MCF 10A (cell line): ENCODE measurements at regions of chr12 and their contacts with region 1.

Region 1: DNA sequence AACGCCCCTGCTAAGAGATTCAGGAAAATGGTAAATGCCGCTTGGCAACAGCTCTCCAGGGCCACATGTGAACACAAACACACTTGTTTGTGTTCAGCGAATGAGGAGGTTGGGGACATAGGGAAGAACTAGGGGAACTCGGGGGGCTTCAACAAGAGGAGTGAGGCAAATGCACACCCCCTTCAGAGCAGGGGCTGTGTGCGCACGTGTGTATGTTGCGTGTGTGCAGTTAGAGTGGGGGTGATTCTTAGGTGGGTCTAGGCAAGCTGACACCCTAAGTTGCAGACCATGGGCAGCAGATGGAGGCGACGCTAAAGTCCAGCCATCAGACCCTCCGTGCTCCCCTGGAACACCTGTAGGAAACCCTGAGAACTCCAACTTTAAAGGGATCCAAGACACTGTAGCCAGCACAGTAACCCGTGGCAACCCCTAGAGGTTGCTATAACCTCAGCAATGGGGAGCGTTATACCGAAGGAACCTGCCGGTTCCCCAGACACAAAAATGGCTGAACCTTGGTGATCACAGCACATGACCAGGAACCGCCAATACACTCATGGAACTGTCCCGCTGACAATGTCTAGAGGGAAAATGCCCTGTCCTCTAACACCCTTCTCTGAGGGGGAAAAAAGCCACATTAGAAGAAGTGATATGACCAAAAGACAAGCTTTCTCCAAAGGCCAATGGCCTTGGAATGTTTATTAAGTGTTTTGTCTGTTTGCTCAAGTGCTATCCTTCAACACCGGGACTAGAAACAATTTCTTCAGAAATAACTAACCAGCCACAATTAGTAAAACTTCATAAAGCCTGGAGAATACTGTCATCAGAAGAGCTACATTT is 86.5 kb upstream of the CEP83 start:
- DNase-seq: peak; percentile 67
- H3K4me3 Mint-ChIP-seq: no peak overlapping the region
- H3K27ac Mint-ChIP-seq: no peak overlapping the region
- H3K4me1 Mint-ChIP-seq: peaks cover 5% of the 10 kb centered on the region
- H3K27me3 Mint-ChIP-seq: no peaks in the 10 kb centered on the region
- CTCF ChIP-seq: peak; percentile 84

Region 2: GRCh38 chr12:94516985-94517384 is 29.2 kb before region 1 on chr12:
- CTCF ChIA-PET with region 1: no interaction called
- POLR2A ChIA-PET with region 1: no interaction called
- intact Hi-C with region 1: no loop called
- DNase-seq: no peak
- H3K4me3 Mint-ChIP-seq: no peak overlapping the region
- H3K27ac Mint-ChIP-seq: no peak overlapping the region
- H3K4me1 Mint-ChIP-seq: no peaks in the 10 kb centered on the region
- H3K27me3 Mint-ChIP-seq: no peaks in the 10 kb centered on the region
- CTCF ChIP-seq: no peak

Region 3: DNA sequence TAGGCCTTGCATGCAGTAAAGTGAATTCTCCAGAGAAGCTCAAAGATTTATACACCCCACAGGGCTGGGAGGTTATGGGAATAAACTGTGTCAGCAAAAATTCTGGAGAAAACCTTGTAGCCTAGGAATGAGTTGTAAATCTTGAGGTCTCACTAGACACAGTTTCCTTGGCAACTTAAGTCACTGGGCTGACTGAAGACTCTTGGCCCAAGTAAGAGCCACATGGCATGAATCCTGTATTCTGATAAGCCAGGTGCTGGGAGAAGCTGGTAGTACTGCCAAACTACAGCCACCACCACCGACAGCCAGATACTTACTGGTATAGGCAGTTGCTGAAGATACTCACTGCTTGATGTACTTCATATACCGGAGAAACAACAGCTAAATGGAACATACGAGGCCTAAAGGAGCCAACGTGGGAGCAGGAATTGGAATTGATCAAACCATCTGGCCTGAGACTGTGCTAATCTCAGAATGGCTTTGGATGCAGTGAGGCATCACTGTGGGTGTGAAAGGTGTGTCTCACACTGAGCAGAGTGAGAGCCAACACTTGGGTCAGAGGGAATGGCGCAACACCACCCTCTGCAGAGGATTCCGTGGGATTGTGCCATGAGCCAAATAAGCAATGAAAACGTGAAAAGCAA is 207.0 kb after region 1 on chr12:
- CTCF ChIA-PET with region 1: interaction called, 19 read pairs
- POLR2A ChIA-PET with region 1: no interaction called
- intact Hi-C with region 1: loop called (anchors 1 kb)
- DNase-seq: peak; percentile 70
- H3K4me3 Mint-ChIP-seq: no peak overlapping the region
- H3K27ac Mint-ChIP-seq: no peak overlapping the region
- H3K4me1 Mint-ChIP-seq: peaks cover 13% of the 10 kb centered on the region
- H3K27me3 Mint-ChIP-seq: no peaks in the 10 kb centered on the region
- CTCF ChIP-seq: no peak

Region 4: DNA sequence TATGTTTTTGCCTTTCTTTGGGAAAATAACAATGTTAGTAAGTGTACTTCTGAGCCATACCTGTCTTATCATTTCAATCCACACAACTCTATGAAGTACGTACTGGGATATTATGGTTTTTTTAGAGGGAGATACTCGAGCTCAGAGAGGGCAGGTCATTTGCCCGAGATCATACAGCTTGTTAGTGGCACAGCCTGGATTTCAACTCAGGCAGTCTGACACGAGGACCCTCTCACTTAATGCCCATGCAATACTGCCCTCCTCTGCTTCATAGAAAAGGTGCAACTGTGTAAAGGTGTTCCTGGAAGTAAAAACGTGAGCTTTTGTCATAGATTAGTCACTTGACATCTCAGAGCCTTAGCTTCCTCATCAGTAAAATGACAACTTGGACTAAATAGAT is 329.4 kb after region 1 on chr12:
- CTCF ChIA-PET with region 1: no interaction called
- POLR2A ChIA-PET with region 1: no interaction called
- intact Hi-C with region 1: loop called (anchors 1 kb)
- DNase-seq: peak; percentile 47
- H3K4me3 Mint-ChIP-seq: no peak overlapping the region
- H3K27ac Mint-ChIP-seq: no peak overlapping the region
- H3K4me1 Mint-ChIP-seq: peaks cover 12% of the 10 kb centered on the region
- H3K27me3 Mint-ChIP-seq: peaks cover 45% of the 10 kb centered on the region
- CTCF ChIP-seq: peak; percentile 13

Region 5: DNA sequence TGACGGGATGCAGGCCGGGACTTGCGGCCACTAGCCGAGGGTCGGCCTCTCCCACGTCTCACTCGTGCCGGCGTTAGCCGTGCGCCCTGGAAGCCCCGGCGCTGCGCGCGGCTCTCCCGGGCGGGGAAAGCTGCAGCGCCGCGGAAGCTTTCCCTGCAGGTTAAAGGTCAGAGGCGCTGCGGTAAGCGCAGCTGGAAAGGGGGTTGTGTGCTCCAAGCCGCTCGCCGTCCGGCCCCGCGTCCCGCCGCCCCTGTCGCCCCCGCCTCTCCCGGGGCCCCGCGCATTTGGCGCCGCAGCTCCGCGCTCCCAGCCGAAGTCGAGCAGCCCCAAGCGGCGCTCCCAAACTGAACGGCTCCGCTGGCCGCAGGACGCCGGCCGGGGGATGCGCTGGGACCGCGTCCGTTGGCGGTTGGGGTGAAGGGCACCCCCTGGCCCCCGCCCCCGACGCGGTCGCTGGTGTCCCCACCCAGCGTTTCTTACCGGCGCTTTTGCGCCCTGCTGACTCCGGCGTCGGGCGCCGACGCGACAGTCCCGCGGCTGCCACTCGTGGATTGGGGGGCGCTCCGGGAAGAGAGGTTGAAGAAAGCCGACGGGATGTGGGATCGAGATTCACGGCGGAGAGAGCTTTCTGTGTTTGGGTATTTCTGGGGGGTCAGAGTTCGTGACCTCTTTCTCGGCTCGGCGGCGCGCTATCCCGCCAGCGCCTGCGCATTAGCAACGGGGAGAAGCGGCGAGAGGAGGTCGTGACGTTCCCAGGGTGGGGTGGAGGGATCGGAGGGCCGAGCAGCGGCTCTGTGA is 526.9 kb after region 1 on chr12 and contains the start of gene NR2C1:
- CTCF ChIA-PET with region 1: no interaction called
- POLR2A ChIA-PET with region 1: interaction called, 4 read pairs
- intact Hi-C with region 1: loop called (anchors 5 kb)
- DNase-seq: peak; percentile 92
- H3K4me3 Mint-ChIP-seq: peak within 1 kb of the TSS; percentile 88
- H3K27ac Mint-ChIP-seq: peak within 1 kb of the TSS; percentile 59
- H3K4me1 Mint-ChIP-seq: peaks cover 4% of the 10 kb centered on the region
- H3K27me3 Mint-ChIP-seq: no peaks in the 10 kb centered on the region
- CTCF ChIP-seq: no peak
- total RNA-seq, gene NR2C1: 29.0 and 35.2 TPM in 2 replicates

Region 6: GRCh38 chr12:95532851-95533250 is 986.7 kb after region 1 on chr12:
- CTCF ChIA-PET with region 1: interaction called, 5 read pairs
- POLR2A ChIA-PET with region 1: no interaction called
- intact Hi-C with region 1: loop called (anchors 10 kb)
- DNase-seq: no peak
- H3K4me3 Mint-ChIP-seq: no peak overlapping the region
- H3K27ac Mint-ChIP-seq: no peak overlapping the region
- H3K4me1 Mint-ChIP-seq: peaks cover 18% of the 10 kb centered on the region
- H3K27me3 Mint-ChIP-seq: no peaks in the 10 kb centered on the region
- CTCF ChIP-seq: no peak